Heart left ventricle (tissue), 16 donors: ENCODE measurements at regions of chr9 and their contacts with region 1.

Region 1: DNA sequence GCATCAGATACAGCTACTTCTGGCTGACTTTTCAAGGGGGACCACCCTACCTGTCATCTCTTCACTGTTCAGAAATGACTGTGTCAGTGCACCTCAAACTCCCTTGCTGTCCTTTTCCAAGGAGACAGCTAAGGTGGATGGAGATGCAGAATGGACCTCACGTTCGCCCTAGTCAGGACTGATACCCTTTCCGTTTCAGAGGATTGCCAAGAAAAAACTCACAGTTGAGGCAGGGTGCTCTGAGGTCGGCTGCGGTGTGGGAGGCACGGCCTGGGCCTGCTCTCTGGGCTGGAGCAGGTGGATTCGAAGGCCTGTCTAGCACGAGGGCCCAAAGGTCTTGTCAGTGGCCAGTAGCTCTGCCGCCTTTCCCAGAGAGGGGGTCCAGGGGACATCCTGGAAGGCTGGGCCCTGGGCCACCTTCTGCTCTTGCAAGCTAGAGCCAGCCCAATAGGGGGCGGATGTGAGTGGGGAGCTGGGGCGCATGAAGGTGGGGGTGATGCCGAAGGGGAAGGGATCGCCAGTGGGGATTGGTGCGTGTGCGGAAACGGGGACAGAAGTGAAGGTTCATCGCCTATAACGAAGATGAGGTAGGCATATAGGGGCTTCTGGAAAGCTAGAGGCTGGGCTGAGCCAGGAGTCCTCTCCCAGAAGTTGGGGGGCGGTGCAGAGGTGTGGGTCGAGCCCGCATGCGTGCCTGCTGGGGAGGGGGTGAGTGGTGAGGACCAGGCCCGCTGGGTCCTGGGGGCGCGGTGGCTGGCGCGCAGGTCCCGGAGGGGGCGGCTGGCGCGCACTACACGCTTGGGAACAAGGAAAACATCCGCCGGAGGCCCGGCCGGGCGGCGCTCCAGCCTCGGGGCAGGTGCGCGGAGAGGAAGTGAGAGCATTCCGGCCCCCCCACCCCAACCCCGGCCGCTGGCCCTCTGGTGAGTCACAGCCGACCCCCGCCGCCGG is 2.5 kb upstream of the MSMP start:
- DNase-seq: peak; percentile 74 to 86 (median 84)
- ATAC-seq: peak; percentile 49 to 83 (median 74)
- H3K4me3 ChIP-seq: peak overlapping the region; percentile 30 to 67 (median 62)
- H3K27ac ChIP-seq: peak overlapping the region; percentile 75 to 95 (median 88)
- H3K4me1 ChIP-seq: peaks cover 0 to 38% (median 26%) of the 10 kb centered on the region in 12 donors
- H3K27me3 ChIP-seq: no peaks in the 10 kb centered on the region
- CTCF ChIP-seq: peak; percentile 28 to 69 (median 58)
- POLR2A ChIP-seq: no peak

Region 2: GRCh38 chr9:35814841-35815543 is 58.4 kb after region 1 on chr9 and contains the start of gene HINT2:
- intact Hi-C with region 1: loop called in 1 of 10 experiments (anchors 10 kb)
- DNase-seq: peak; percentile 96 to 98 (median 97)
- ATAC-seq: peak; percentile 93 to 95 (median 93)
- H3K4me3 ChIP-seq: peak within 1 kb of the TSS; percentile 67 to 99 (median 85)
- H3K27ac ChIP-seq: peak within 1 kb of the TSS; percentile 89 to 100 (median 98)
- H3K4me1 ChIP-seq: peaks cover 5 to 40% (median 31%) of the 10 kb centered on the region in 12 donors
- H3K27me3 ChIP-seq: no peaks in the 10 kb centered on the region
- CTCF ChIP-seq: peak in 1 of 12 donors; percentile 5
- POLR2A ChIP-seq: peak; percentile 86 to 97
- total RNA-seq, gene HINT2: 48.7 to 77.5 (median 57.4) TPM